CD14-positive monocyte (primary cell): ENCODE measurements at regions of chr4 and their contacts with region 1.

Region 1: GRCh38 chr4:169619959-169620879 is at the start of gene CLCN3:
- DNase-seq: peak; percentile 99 to 100 (median 100)
- H3K4me3 ChIP-seq: peak within 1 kb of the TSS; percentile 60 to 95 (median 84)
- H3K4me3 Mint-ChIP-seq: peak within 1 kb of the TSS; percentile 92 to 99
- H3K27ac ChIP-seq: peak within 1 kb of the TSS; percentile 99
- H3K27ac Mint-ChIP-seq: peak within 1 kb of the TSS; percentile 100
- H3K4me1 ChIP-seq: peaks cover 28% of the 10 kb centered on the region in 2 donors
- H3K4me1 Mint-ChIP-seq: peaks cover 32% of the 10 kb centered on the region
- H3K27me3 ChIP-seq: no peaks in the 10 kb centered on the region
- H3K27me3 Mint-ChIP-seq: peaks cover 0 to 9% (median 6%) of the 10 kb centered on the region in 3 donors
- CTCF ChIP-seq: peak; percentile 3
- polyA plus RNA-seq, gene CLCN3: 5.3 to 7.8 (median 5.4) TPM

Region 2: GRCh38 chr4:169659716-169660670 is 39.8 kb after region 1 on chr4:
- intact Hi-C with region 1: loop called in 1 of 2 experiments (anchors 5 kb)
- DNase-seq: peak; percentile 93 to 99 (median 99)
- H3K4me3 ChIP-seq: peak overlapping the region; percentile 17 to 85 (median 72)
- H3K4me3 Mint-ChIP-seq: peak overlapping the region; percentile 62 to 69
- H3K27ac ChIP-seq: peak overlapping the region in 1 of 2 donors; percentile 82
- H3K27ac Mint-ChIP-seq: peak overlapping the region; percentile 87 to 96 (median 95)
- H3K4me1 ChIP-seq: peaks cover 11 to 18% of the 10 kb centered on the region in 2 donors
- H3K4me1 Mint-ChIP-seq: peaks cover 17% of the 10 kb centered on the region
- H3K27me3 ChIP-seq: no peaks in the 10 kb centered on the region
- H3K27me3 Mint-ChIP-seq: no peaks in the 10 kb centered on the region
- CTCF ChIP-seq: no peak

Region 3: DNA sequence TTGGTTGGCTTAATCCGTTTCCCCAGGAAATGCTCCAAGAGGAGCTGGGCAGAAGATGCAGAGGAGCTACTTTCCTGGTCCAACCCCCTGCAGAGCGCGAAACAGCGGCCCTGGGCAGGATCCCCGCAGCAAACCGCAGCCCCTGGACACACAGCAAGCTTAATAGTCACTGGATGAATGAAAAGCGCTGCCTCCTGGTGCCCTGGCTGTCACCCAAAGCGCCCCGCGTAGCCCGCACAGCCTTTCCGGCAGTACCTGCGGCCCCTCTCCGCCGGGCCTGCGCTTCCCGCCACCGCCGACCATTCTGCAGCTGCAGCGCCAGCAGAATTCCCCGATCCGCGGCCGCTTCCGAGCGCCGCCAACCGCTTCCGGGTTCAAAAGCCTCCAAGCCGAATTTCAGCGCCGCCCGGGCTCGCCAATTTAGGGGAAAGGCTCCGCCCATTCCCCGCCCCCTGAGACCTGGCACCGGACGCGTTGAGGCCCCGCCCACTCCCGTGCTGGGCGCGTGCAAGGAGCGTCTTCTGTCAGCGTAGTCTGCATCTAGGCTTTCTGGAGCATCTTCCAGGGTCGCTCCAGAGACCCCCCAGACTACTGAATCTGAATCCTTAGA is 137.5 kb after region 1 on chr4 and contains the start of gene HPF1:
- intact Hi-C with region 1: loop called in 1 of 2 experiments (anchors 5 kb)
- DNase-seq: peak; percentile 87 to 92 (median 90)
- H3K4me3 ChIP-seq: peak within 1 kb of the TSS; percentile 62 to 90 (median 86)
- H3K4me3 Mint-ChIP-seq: peak within 1 kb of the TSS; percentile 92 to 94
- H3K27ac ChIP-seq: peak within 1 kb of the TSS; percentile 2 to 71
- H3K27ac Mint-ChIP-seq: peak within 1 kb of the TSS; percentile 16 to 81 (median 74)
- H3K4me1 ChIP-seq: peaks cover 14 to 17% of the 10 kb centered on the region in 2 donors
- H3K4me1 Mint-ChIP-seq: peaks cover 24% of the 10 kb centered on the region
- H3K27me3 ChIP-seq: no peaks in the 10 kb centered on the region
- H3K27me3 Mint-ChIP-seq: peaks cover 3 to 4% (median 4%) of the 10 kb centered on the region in 3 donors
- CTCF ChIP-seq: no peak
- polyA plus RNA-seq, gene HPF1: 10.2 to 29.9 (median 25.1) TPM